SK-N-SH (cell line): ENCODE measurements at regions of chr1 and their contacts with region 1.

Region 1: GRCh38 chr1:229479660-229480399 is 28.3 kb downstream of the NUP133 start:
- DNase-seq: no peak
- H3K4me3 ChIP-seq: 0 out of 4 replicates have a peak overlapping the region, but pooled peaks of 1 of the 2 experiments have one; percentile 5
- H3K27ac ChIP-seq: no peak overlapping the region
- H3K4me1 ChIP-seq: peaks cover 0 to 7% of the 10 kb centered on the region in 2 experiments; a peak in 1 of 4 replicates
- H3K27me3 ChIP-seq: no peaks in the 10 kb centered on the region
- CTCF ChIP-seq: no peak
- EP300 ChIP-seq: no peak
- RAD21 ChIP-seq: no peak

Region 2: GRCh38 chr1:228664399-228664914 is 815.4 kb before region 1 on chr1:
- CTCF ChIA-PET with region 1: interaction called, 12 read pairs
- POLR2A ChIA-PET with region 1: no interaction called
- DNase-seq: peak; percentile 72
- H3K4me3 ChIP-seq: no peak overlapping the region
- H3K27ac ChIP-seq: no peak overlapping the region
- H3K4me1 ChIP-seq: no peaks in the 10 kb centered on the region
- H3K27me3 ChIP-seq: no peaks in the 10 kb centered on the region
- CTCF ChIP-seq: peak; percentile 94
- EP300 ChIP-seq: no peak
- RAD21 ChIP-seq: peak; percentile 95

Region 3: DNA sequence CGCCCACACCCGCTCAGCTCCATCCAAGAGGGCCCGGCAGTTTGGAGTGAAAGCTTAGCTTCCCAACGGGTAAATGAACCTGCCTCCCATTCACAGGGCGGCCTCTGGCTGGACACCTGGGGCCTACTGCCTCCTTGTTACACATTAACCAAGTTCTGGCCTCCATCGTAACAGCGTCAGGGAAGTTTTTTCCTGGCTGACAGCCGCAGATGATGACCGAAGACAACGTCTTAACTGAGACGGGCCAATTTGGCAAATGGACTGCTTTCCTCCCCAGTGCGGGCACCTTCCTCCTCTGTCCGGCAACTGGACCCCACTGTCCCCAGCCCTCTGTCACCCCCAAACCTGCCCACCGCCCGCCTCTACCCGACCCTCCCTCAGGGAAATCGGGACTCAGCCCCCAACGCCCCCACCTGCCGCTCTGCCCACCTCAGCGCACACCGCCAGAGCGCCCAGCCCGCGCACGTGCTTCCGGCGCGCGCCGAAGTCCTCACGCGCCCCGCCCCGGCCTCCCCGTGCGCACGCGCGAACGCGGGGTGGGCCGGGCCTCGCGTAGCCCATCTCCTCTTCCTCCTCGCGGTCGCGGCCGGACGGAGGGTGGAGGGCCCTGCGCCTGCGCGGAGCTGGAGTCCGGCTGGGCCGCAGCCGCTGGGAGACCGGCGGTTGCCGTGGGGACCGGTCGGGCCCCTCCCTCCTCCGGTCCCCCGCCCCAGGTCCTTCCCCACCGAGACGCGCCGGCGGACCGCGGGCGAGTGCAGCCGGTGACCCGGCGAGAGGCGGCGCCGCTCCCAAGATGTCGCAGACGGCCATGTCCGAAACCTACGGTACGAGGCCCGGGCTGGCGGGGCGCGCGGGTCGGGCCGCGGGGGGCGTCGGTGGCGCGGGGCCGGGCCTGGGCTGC is 209.0 kb before region 1 on chr1 and contains the start of gene RAB4A:
- CTCF ChIA-PET with region 1: interaction called, 10 read pairs
- POLR2A ChIA-PET with region 1: no interaction called
- DNase-seq: peak; percentile 99
- H3K4me3 ChIP-seq: peak within 1 kb of the TSS; percentile 77 to 80
- H3K27ac ChIP-seq: peak within 1 kb of the TSS; percentile 36 to 64; a peak in 3 of 4 replicates
- H3K4me1 ChIP-seq: peaks cover 0 to 15% of the 10 kb centered on the region in 2 experiments; a peak in 3 of 4 replicates
- H3K27me3 ChIP-seq: no peaks in the 10 kb centered on the region
- CTCF ChIP-seq: no peak
- EP300 ChIP-seq: no peak
- RAD21 ChIP-seq: no peak
- polyA plus RNA-seq, gene RAB4A: 25.5 and 28.1 TPM in 2 replicates

Region 4: GRCh38 chr1:229370601-229371021 is 109.2 kb before region 1 on chr1:
- CTCF ChIA-PET with region 1: interaction called, 10 read pairs
- POLR2A ChIA-PET with region 1: no interaction called
- DNase-seq: peak; percentile 55
- H3K4me3 ChIP-seq: no peak overlapping the region
- H3K27ac ChIP-seq: no peak overlapping the region
- H3K4me1 ChIP-seq: no peaks in the 10 kb centered on the region; a peak in 2 of 4 replicates
- H3K27me3 ChIP-seq: peaks cover 9% of the 10 kb centered on the region; the same call in 1 of the 2 replicates
- CTCF ChIP-seq: no peak
- EP300 ChIP-seq: no peak
- RAD21 ChIP-seq: no peak; the same call in 1 of the 2 replicates

Region 5: DNA sequence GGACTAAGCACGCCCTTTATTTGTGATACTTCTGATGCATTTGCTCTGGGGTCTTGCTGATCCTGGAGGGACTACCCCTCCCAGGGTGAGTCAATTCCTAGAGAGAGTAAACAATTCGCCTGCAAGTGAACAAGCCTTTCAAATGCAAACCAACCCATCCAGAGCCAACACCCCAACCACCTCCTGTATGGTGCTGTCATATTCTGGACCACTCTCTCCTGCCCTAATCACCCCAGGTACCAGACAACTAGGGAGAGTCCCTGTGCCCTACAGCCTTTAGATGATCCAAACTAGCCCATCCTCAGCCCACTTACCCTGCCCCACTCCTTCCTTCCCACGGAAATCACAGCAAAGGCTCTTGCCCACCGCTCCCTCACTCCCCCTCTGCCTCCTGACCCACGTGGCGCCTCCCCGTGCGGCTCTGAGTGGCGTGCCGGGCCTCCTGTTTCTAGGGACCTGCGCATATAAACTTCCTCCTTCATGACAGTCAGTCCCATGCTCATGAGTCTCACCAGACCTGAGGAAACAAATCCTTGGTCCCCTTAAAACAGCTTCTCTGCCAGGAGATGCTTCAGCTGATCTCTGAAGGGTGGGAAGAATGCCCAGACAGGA is 83.1 kb before region 1 on chr1:
- CTCF ChIA-PET with region 1: no interaction called
- POLR2A ChIA-PET with region 1: no interaction called
- DNase-seq: no peak
- H3K4me3 ChIP-seq: no peak overlapping the region
- H3K27ac ChIP-seq: no peak overlapping the region
- H3K4me1 ChIP-seq: no peaks in the 10 kb centered on the region
- H3K27me3 ChIP-seq: peaks cover 10% of the 10 kb centered on the region; the same call in 1 of the 2 replicates
- CTCF ChIP-seq: no peak
- EP300 ChIP-seq: no peak
- RAD21 ChIP-seq: no peak

Region 6: GRCh38 chr1:229495782-229496181 is 16.0 kb after region 1 on chr1:
- CTCF ChIA-PET with region 1: interaction called, 37 read pairs
- POLR2A ChIA-PET with region 1: interaction called, 5 read pairs
- DNase-seq: no peak
- H3K4me3 ChIP-seq: no peak overlapping the region
- H3K27ac ChIP-seq: no peak overlapping the region
- H3K4me1 ChIP-seq: no peaks in the 10 kb centered on the region
- H3K27me3 ChIP-seq: no peaks in the 10 kb centered on the region
- CTCF ChIP-seq: no peak
- EP300 ChIP-seq: no peak
- RAD21 ChIP-seq: no peak